GM12878 (cell line): ENCODE measurements at regions of chr13 and their contacts with region 1.

Region 1: DNA sequence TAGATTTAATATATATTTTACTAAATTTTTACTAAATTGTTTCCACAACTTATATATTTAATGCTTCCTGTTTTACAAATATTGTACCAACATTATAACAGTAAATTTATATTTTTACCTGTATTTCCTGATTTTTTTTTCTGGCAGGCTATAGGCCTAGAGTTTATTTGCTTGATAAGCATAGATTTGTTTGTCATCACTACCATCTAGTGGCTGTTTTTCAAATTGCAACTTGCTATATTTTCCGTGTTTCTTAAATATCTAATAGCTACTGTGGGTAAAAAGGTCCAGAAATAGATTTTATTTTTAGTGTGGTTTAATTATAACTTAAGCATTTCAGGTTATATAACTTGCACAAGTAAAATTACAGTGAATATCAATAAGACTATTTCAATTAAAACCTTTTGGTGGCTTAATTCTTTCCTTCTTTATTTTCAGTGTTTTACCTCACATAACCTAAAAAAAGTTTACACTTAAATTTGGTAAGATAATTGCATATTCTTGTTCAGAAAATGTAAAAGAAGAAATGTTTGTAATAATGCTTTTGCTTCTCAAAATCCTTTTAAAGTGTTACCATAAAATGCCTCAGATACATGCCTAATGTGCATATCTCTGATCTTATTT is 60.6 kb downstream of the NDFIP2 start:
- DNase-seq: peak; percentile 49
- ATAC-seq: peak; percentile 73
- H3K4me3 ChIP-seq: no peak overlapping the region
- H3K27ac ChIP-seq: no peak overlapping the region
- H3K4me1 ChIP-seq: no peaks in the 10 kb centered on the region
- H3K27me3 ChIP-seq: no peaks in the 10 kb centered on the region
- CTCF ChIP-seq: peak; percentile 57 to 69 (median 59)
- EP300 ChIP-seq: no peak
- POLR2A ChIP-seq: no peak
- RAD21 ChIP-seq: peak; percentile 95

Region 2: DNA sequence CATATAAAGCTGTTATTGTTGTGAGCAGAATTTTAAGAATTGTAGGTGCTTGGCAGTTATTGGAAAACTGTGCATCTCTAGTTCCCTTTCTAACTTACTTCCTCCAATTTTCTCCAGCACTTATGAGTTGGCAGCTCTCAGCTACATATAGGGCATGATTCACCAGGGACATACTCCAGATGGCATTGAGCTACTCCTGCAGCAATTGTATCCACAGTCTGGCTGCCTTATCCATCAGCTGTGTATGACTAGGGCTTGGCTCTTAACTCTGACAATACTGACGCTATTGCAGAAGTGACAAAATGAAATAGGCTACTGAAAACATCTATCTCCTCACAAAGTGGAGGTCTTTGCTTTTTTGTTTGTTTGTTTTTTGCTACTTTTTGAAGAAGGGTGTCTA is 1214.9 kb before region 1 on chr13:
- CTCF ChIA-PET with region 1: no interaction called
- POLR2A ChIA-PET with region 1: no interaction called
- RAD21 ChIA-PET with region 1: no interaction called
- SMC1A ChIA-PET with region 1: no interaction called
- in situ Hi-C with region 1: no loop called
- intact Hi-C with region 1: no loop called
- DNase-seq: no peak
- ATAC-seq: no peak
- H3K4me3 ChIP-seq: no peak overlapping the region
- H3K27ac ChIP-seq: no peak overlapping the region
- H3K4me1 ChIP-seq: no peaks in the 10 kb centered on the region
- H3K27me3 ChIP-seq: no peaks in the 10 kb centered on the region; a peak in 1 of 4 replicates
- CTCF ChIP-seq: no peak
- EP300 ChIP-seq: no peak
- POLR2A ChIP-seq: no peak
- RAD21 ChIP-seq: no peak

Region 3: DNA sequence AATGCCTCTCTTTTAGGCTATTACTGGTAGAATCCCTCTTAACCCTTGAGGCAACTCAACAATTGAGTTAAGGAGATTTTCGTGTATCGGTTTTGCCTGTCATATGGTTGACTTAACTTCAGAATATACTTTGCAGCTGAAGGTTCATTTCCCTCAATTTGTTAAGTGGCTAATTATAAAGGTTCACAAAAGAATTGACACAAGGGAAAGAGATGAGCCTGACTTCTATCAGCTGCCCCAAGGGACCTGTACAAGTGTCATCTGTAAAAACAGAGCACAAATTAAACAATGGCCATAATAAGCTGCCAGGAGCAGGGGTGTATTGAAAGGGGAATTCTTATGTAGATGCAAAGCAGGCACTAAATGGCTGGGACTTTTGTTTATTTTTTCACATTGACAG is 547.7 kb before region 1 on chr13:
- CTCF ChIA-PET with region 1: no interaction called
- POLR2A ChIA-PET with region 1: no interaction called
- RAD21 ChIA-PET with region 1: no interaction called
- SMC1A ChIA-PET with region 1: no interaction called
- in situ Hi-C with region 1: no loop called
- intact Hi-C with region 1: loop called (anchors 10 kb)
- DNase-seq: peak; percentile 21
- ATAC-seq: peak; percentile 76
- H3K4me3 ChIP-seq: no peak overlapping the region
- H3K27ac ChIP-seq: no peak overlapping the region
- H3K4me1 ChIP-seq: no peaks in the 10 kb centered on the region
- H3K27me3 ChIP-seq: no peaks in the 10 kb centered on the region
- CTCF ChIP-seq: no peak
- EP300 ChIP-seq: peak; percentile 75 to 79; a peak in 3 of 4 replicates
- POLR2A ChIP-seq: no peak
- RAD21 ChIP-seq: no peak

Region 4: GRCh38 chr13:79413521-79413920 is 128.0 kb before region 1 on chr13:
- CTCF ChIA-PET with region 1: interaction called, 29 read pairs
- POLR2A ChIA-PET with region 1: no interaction called
- RAD21 ChIA-PET with region 1: interaction called, 3 read pairs
- SMC1A ChIA-PET with region 1: interaction called, 30 read pairs
- in situ Hi-C with region 1: no loop called
- intact Hi-C with region 1: no loop called
- DNase-seq: no peak
- ATAC-seq: no peak
- H3K4me3 ChIP-seq: no peak overlapping the region
- H3K27ac ChIP-seq: no peak overlapping the region
- H3K4me1 ChIP-seq: no peaks in the 10 kb centered on the region
- H3K27me3 ChIP-seq: no peaks in the 10 kb centered on the region
- CTCF ChIP-seq: no peak
- EP300 ChIP-seq: no peak
- POLR2A ChIP-seq: no peak
- RAD21 ChIP-seq: no peak

Region 5: DNA sequence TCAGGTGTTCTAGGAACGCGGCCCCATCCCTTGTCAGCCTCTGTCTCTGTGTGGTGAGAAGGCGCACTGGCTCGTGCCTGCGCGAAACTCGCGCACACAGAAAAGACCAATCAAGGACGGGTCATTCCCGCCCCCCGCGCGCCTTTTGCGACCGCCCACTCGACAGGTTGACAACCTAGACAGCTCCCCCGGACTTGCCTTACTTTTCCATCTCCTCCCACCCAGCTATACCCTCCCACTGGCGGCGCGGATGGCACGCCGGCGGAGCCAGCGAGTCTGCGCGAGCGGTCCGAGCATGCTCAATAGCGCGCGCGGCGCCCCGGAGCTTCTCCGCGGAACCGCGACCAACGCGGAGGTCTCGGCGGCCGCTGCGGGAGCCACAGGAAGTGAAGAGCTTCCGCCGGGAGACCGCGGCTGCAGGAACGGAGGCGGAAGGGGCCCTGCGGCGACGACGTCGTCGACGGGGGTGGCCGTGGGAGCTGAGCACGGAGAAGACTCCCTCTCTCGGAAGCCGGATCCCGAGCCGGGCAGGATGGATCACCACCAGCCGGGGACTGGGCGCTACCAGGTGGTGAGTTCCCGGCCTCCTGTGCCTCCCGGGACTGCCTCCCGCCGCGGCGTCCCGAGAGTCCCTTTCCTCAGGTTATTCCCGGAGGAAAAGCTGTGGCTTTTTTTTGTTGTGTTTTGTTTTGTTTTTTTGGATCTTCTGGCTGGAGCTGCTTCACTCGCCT is 60.4 kb before region 1 on chr13 and contains the start of gene NDFIP2:
- CTCF ChIA-PET with region 1: interaction called, 14 read pairs
- POLR2A ChIA-PET with region 1: no interaction called
- RAD21 ChIA-PET with region 1: interaction called, 22 read pairs
- SMC1A ChIA-PET with region 1: interaction called, 20 read pairs
- in situ Hi-C with region 1: no loop called
- intact Hi-C with region 1: no loop called
- DNase-seq: peak; percentile 58
- ATAC-seq: peak; percentile 89
- H3K4me3 ChIP-seq: peak within 1 kb of the TSS; percentile 97
- H3K27ac ChIP-seq: no peak within 1 kb of the TSS
- H3K4me1 ChIP-seq: peaks cover 4% of the 10 kb centered on the region; the same call in 1 of the 2 replicates
- H3K27me3 ChIP-seq: no peaks in the 10 kb centered on the region
- CTCF ChIP-seq: no peak
- EP300 ChIP-seq: peak; percentile 20 to 45; a peak in 2 of 4 replicates
- POLR2A ChIP-seq: peak; percentile 82
- RAD21 ChIP-seq: no peak
- polyA plus RNA-seq, gene NDFIP2: 23.0 to 30.7 TPM

Region 6: GRCh38 chr13:79528759-79529191 is 12.8 kb before region 1 on chr13:
- CTCF ChIA-PET with region 1: interaction called, 42 read pairs
- POLR2A ChIA-PET with region 1: no interaction called
- RAD21 ChIA-PET with region 1: interaction called, 7 read pairs
- SMC1A ChIA-PET with region 1: interaction called, 38 read pairs
- in situ Hi-C with region 1: no loop called
- intact Hi-C with region 1: no loop called
- DNase-seq: no peak
- ATAC-seq: no peak
- H3K4me3 ChIP-seq: no peak overlapping the region
- H3K27ac ChIP-seq: no peak overlapping the region
- H3K4me1 ChIP-seq: peaks cover 6% of the 10 kb centered on the region; the same call in 1 of the 2 replicates
- H3K27me3 ChIP-seq: no peaks in the 10 kb centered on the region
- CTCF ChIP-seq: no peak
- EP300 ChIP-seq: no peak
- POLR2A ChIP-seq: no peak
- RAD21 ChIP-seq: no peak